Natural killer cell (primary cell): ENCODE measurements at regions of chr3 and their contacts with region 1.

Region 1: GRCh38 chr3:47164007-47164881 is at the start of gene SETD2:
- DNase-seq: peak; percentile 78 to 91
- ATAC-seq: peak; percentile 85 to 94 (median 87)
- H3K4me3 ChIP-seq: peak within 1 kb of the TSS; percentile 91
- H3K4me3 Mint-ChIP-seq: peak within 1 kb of the TSS; percentile 96
- H3K27ac ChIP-seq: peak within 1 kb of the TSS; percentile 90
- H3K27ac Mint-ChIP-seq: peak within 1 kb of the TSS; percentile 86 to 95
- H3K4me1 ChIP-seq: peaks cover 30% of the 10 kb centered on the region
- H3K4me1 Mint-ChIP-seq: peaks cover 51 to 52% of the 10 kb centered on the region in 2 donors
- H3K27me3 ChIP-seq: no peaks in the 10 kb centered on the region
- H3K27me3 Mint-ChIP-seq: no peaks in the 10 kb centered on the region
- CTCF ChIP-seq: peak; percentile 40
- total RNA-seq, gene SETD2: 86.5 to 104 (median 95.9) TPM

Region 2: GRCh38 chr3:47035634-47036033 is 128.6 kb before region 1 on chr3:
- intact Hi-C with region 1: loop called (anchors 5 kb)
- DNase-seq: no peak
- ATAC-seq: no peak
- H3K4me3 ChIP-seq: no peak overlapping the region
- H3K4me3 Mint-ChIP-seq: no peak overlapping the region
- H3K27ac ChIP-seq: no peak overlapping the region
- H3K27ac Mint-ChIP-seq: peak overlapping the region in 1 of 2 donors; percentile 31
- H3K4me1 ChIP-seq: peaks cover 11% of the 10 kb centered on the region
- H3K4me1 Mint-ChIP-seq: peaks cover 23 to 36% of the 10 kb centered on the region in 2 donors
- H3K27me3 ChIP-seq: no peaks in the 10 kb centered on the region
- H3K27me3 Mint-ChIP-seq: no peaks in the 10 kb centered on the region
- CTCF ChIP-seq: no peak

Region 3: DNA sequence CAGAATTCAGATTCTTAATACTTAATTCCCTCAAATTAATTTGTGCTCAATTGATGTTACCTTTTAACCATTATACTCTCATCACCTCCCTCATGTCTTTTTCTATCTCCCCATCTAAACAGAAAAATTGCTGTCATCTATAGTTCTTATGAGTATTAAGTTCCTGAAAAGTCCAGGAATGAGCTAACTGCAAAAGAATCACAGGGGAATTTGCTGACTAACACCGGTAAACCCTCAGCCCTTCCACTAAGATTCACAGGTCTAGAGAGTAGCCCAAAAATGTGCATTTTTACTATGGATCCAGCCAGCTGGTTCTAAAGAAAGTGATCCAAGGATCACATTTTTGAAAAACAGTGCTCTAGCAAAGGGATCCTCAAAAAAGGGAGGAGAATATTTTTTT is 67.3 kb before region 1 on chr3:
- intact Hi-C with region 1: no loop called
- DNase-seq: no peak
- ATAC-seq: no peak
- H3K4me3 ChIP-seq: no peak overlapping the region
- H3K4me3 Mint-ChIP-seq: no peak overlapping the region
- H3K27ac ChIP-seq: no peak overlapping the region
- H3K27ac Mint-ChIP-seq: peak overlapping the region; percentile 26 to 46
- H3K4me1 ChIP-seq: no peaks in the 10 kb centered on the region
- H3K4me1 Mint-ChIP-seq: peaks cover 2 to 5% of the 10 kb centered on the region in 2 donors
- H3K27me3 ChIP-seq: no peaks in the 10 kb centered on the region
- H3K27me3 Mint-ChIP-seq: no peaks in the 10 kb centered on the region
- CTCF ChIP-seq: no peak

Region 4: DNA sequence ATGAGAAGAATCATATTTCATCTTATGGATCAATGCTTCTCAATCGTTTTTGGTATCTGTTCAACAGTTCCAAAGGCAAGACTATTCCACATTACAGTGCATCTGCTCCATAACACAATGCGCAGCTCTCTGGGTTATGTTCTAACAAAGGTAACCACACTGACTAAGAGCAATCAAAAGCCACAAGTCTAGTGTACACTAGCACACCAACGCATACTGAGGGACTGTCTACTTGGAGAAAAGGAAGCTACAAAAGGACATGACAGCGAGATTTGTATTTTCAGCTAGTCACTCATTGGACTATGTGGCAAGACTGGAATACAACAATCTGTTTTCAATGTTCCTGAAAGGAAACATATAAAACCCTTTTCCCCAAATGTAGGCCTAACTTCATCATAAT is 36.1 kb before region 1 on chr3:
- intact Hi-C with region 1: loop called (anchors 5 kb)
- DNase-seq: no peak
- ATAC-seq: peak in 1 of 3 donors; percentile 40
- H3K4me3 ChIP-seq: no peak overlapping the region
- H3K4me3 Mint-ChIP-seq: no peak overlapping the region
- H3K27ac ChIP-seq: no peak overlapping the region
- H3K27ac Mint-ChIP-seq: peak overlapping the region; percentile 0 to 47
- H3K4me1 ChIP-seq: peaks cover 5% of the 10 kb centered on the region
- H3K4me1 Mint-ChIP-seq: peaks cover 39 to 66% of the 10 kb centered on the region in 2 donors
- H3K27me3 ChIP-seq: no peaks in the 10 kb centered on the region
- H3K27me3 Mint-ChIP-seq: no peaks in the 10 kb centered on the region
- CTCF ChIP-seq: no peak

Region 5: GRCh38 chr3:47282424-47283192 is 118.4 kb after region 1 on chr3 and contains the starts of genes KIF9 and KLHL18:
- intact Hi-C with region 1: loop called (anchors 1 kb)
- DNase-seq: peak; percentile 94 to 99
- ATAC-seq: peak; percentile 85 to 96 (median 87)
- H3K4me3 ChIP-seq: peak within 1 kb of the TSS; percentile 92
- H3K4me3 Mint-ChIP-seq: peak within 1 kb of the TSS; percentile 99
- H3K27ac ChIP-seq: peak within 1 kb of the TSS; percentile 98
- H3K27ac Mint-ChIP-seq: peak within 1 kb of the TSS; percentile 97 to 100
- H3K4me1 ChIP-seq: peaks cover 37% of the 10 kb centered on the region
- H3K4me1 Mint-ChIP-seq: peaks cover 37 to 43% of the 10 kb centered on the region in 2 donors
- H3K27me3 ChIP-seq: no peaks in the 10 kb centered on the region
- H3K27me3 Mint-ChIP-seq: no peaks in the 10 kb centered on the region
- CTCF ChIP-seq: no peak
- total RNA-seq, gene KIF9: 11.4 to 21.9 (median 21.4) TPM
- total RNA-seq, gene KLHL18: 37.3 to 47.9 (median 45.2) TPM

Region 6: DNA sequence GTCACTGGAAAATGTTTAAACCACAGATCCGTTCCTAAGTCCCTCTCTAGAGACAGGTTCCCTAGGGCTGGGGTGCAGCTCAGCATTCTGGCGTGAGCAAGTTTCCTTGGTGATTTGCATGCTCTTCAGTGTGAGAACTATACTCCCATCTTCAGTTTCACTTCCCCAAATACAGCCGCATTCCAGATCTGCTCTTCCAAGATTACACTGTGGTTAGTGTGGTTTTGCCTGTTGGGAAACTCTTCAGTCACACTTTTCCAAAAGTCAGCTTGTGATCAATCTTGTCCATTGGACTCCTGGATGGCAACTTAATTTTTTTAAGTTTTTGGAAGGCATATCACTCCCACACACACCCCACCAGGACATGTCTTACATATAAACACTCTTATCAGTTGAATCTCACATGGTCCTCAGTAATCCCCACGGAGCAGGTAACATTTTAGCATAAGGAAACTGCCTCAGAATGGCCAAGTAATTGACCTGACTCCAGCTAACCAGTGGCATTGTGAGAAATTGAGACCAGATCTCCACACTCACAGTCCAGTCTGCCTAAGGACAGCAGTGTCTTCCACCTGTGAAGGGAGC is 183.1 kb after region 1 on chr3:
- intact Hi-C with region 1: no loop called
- DNase-seq: no peak
- ATAC-seq: no peak
- H3K4me3 ChIP-seq: no peak overlapping the region
- H3K4me3 Mint-ChIP-seq: no peak overlapping the region
- H3K27ac ChIP-seq: no peak overlapping the region
- H3K27ac Mint-ChIP-seq: peak overlapping the region in 1 of 2 donors; percentile 20
- H3K4me1 ChIP-seq: peaks cover 6% of the 10 kb centered on the region
- H3K4me1 Mint-ChIP-seq: peaks cover 14 to 15% of the 10 kb centered on the region in 2 donors
- H3K27me3 ChIP-seq: no peaks in the 10 kb centered on the region
- H3K27me3 Mint-ChIP-seq: no peaks in the 10 kb centered on the region
- CTCF ChIP-seq: no peak

Region 7: GRCh38 chr3:47380601-47381316 is 216.5 kb after region 1 on chr3 and contains the start of gene PTPN23:
- intact Hi-C with region 1: loop called (anchors 2 kb)
- DNase-seq: peak; percentile 99
- ATAC-seq: peak; percentile 74 to 87 (median 80)
- H3K4me3 ChIP-seq: peak within 1 kb of the TSS; percentile 85
- H3K4me3 Mint-ChIP-seq: peak within 1 kb of the TSS; percentile 99
- H3K27ac ChIP-seq: peak within 1 kb of the TSS; percentile 89
- H3K27ac Mint-ChIP-seq: peak within 1 kb of the TSS; percentile 99 to 100
- H3K4me1 ChIP-seq: peaks cover 24% of the 10 kb centered on the region
- H3K4me1 Mint-ChIP-seq: peaks cover 40 to 49% of the 10 kb centered on the region in 2 donors
- H3K27me3 ChIP-seq: no peaks in the 10 kb centered on the region
- H3K27me3 Mint-ChIP-seq: no peaks in the 10 kb centered on the region
- CTCF ChIP-seq: no peak
- total RNA-seq, gene PTPN23: 49.3 to 73.6 (median 52.0) TPM